Caco-2 (cell line): ENCODE measurements at regions of chr14 and their contacts with region 1.

Region 1: DNA sequence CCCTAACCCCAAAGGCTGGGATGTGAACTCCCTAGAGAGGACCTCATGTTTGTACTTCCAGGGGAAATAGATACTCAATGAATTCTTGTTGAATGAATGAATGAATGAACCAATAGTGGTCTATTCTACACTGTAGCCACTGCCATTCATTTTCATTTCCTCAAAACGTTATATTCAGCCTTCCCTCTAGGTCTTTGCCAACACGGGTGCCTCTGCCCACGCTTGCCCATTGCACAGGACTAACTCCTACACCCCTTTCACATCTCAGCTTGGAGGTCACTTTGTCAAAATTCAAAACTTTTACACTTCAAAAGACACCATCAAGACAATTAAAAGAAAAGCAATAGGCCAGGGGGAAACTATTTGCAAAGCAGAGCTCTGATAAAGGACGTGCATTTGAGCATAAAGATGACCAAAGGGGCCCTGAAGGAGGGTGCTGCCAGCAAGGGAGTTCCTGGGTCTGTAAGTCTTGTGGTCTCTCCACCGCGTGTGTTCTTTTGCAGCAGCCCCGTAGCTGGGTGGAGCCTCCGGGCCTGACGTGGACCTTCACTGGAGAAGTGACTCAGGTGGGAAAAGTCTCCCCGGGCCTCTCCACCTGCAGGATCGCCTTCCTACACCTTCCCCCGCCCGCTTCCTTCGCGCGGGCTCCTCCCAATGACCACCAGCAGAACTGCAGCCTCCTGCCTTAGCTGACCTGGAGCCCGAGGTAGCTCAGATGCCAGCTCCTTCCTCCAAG is 31.5 kb downstream of the TMEM63C start:
- DNase-seq: peak; percentile 73 to 81
- H3K4me3 ChIP-seq: no peak overlapping the region
- H3K4me3 Mint-ChIP-seq: no peak overlapping the region
- H3K27ac Mint-ChIP-seq: no peak overlapping the region
- H3K4me1 ChIP-seq: no peaks in the 10 kb centered on the region
- H3K4me1 Mint-ChIP-seq: no peaks in the 10 kb centered on the region
- H3K27me3 ChIP-seq: no peaks in the 10 kb centered on the region; the same call in 1 of the 2 replicates
- H3K27me3 Mint-ChIP-seq: peaks cover 23% of the 10 kb centered on the region
- CTCF ChIP-seq: peak; percentile 79 to 93

Region 2: DNA sequence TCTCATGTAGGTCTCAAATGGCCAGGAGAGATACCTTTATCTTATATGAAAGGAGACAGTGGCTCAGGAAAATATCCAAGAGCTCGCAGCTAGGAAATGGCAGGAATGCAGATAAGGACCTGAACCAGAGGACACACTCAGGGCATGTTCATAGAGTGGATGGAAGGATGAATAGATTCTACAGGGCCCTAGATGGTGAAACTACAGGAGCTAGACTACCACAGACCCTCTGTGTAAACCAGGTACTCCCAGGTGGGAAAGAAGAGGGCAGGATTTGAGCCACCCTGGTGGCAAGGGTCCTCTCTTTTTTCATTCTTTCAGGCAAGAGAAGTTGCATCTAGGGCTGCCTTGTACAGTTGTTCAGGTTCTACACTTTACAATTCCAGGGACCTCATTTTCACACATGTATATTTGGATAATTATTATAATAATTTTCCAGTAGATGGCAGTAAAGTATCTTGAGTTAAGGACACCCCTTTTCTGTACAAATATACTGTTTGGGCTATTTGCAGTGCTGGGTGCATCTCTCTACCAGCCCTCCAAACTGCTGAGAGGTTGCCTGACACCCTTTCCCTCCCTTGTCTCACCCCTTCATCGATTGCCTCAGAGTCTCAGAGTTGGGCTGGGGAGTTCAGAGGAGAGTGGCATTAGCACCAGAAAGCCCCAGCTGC is 61.1 kb before region 1 on chr14:
- CTCF ChIA-PET with region 1: interaction called, 68 read pairs
- POLR2A ChIA-PET with region 1: no interaction called
- intact Hi-C with region 1: loop called (anchors 1 kb)
- DNase-seq: no peak
- H3K4me3 ChIP-seq: no peak overlapping the region
- H3K4me3 Mint-ChIP-seq: no peak overlapping the region
- H3K27ac Mint-ChIP-seq: no peak overlapping the region
- H3K4me1 ChIP-seq: no peaks in the 10 kb centered on the region
- H3K4me1 Mint-ChIP-seq: no peaks in the 10 kb centered on the region
- H3K27me3 ChIP-seq: no peaks in the 10 kb centered on the region
- H3K27me3 Mint-ChIP-seq: peaks cover 8% of the 10 kb centered on the region
- CTCF ChIP-seq: no peak